ENCODE measurements at regions of chr16 and their contacts with region 1.

Region 1: GRCh38 chr16:50024684-50025536 is at the start of gene CNEP1R1:
- DNase-seq: peak; percentile 97
- ATAC-seq: peak; percentile 99
- H3K4me3 Mint-ChIP-seq: peak within 1 kb of the TSS; percentile 96
- H3K27ac Mint-ChIP-seq: peak within 1 kb of the TSS; percentile 90
- H3K4me1 Mint-ChIP-seq: peaks cover 20% of the 10 kb centered on the region
- H3K27me3 Mint-ChIP-seq: peaks cover 2% of the 10 kb centered on the region
- total RNA-seq, gene CNEP1R1: 27.7 to 28.4 TPM

Region 2: GRCh38 chr16:49980166-49980565 is 44.7 kb before region 1 on chr16:
- CTCF ChIA-PET with region 1: no interaction called
- DNase-seq: no peak
- ATAC-seq: no peak
- H3K4me3 Mint-ChIP-seq: no peak overlapping the region
- H3K27ac Mint-ChIP-seq: no peak overlapping the region
- H3K4me1 Mint-ChIP-seq: no peaks in the 10 kb centered on the region
- H3K27me3 Mint-ChIP-seq: peaks cover 7% of the 10 kb centered on the region

Region 3: GRCh38 chr16:50046853-50047252 is 21.9 kb after region 1 on chr16:
- CTCF ChIA-PET with region 1: interaction called, 10 read pairs
- DNase-seq: no peak
- ATAC-seq: no peak
- H3K4me3 Mint-ChIP-seq: no peak overlapping the region
- H3K27ac Mint-ChIP-seq: no peak overlapping the region
- H3K4me1 Mint-ChIP-seq: no peaks in the 10 kb centered on the region
- H3K27me3 Mint-ChIP-seq: peaks cover 27% of the 10 kb centered on the region

Region 4: DNA sequence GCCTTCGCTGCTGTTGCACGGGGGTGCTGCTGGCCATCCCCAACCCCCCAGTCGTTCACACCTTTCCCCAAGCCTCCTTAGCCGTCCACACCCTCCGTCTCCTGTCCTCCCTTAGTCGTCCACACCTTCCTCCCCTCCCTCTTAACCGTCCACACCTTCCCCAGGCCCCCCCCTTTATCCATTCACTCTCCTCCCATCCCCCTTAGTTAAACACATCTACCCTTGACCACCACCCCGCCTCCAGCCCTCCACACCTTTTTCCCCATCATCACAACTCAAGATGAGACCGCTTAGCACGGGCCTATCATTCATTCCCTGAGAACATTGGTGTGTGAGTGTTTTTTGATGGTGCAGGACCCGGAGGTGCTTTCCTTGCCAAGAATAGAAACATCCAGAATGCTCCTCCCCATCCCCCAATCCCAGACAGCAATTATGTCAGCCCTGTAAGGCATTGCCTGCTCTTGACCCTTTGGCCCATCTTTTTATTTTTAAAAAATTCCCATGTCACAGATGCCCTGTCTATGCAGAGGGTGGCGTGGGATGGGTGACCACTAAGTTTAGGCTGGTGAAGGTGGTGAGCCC is 129.6 kb after region 1 on chr16:
- CTCF ChIA-PET with region 1: interaction called, 12 read pairs
- DNase-seq: peak; percentile 44
- ATAC-seq: no peak
- H3K4me3 Mint-ChIP-seq: peak overlapping the region; percentile 80
- H3K27ac Mint-ChIP-seq: peak overlapping the region; percentile 69
- H3K4me1 Mint-ChIP-seq: peaks cover 43% of the 10 kb centered on the region
- H3K27me3 Mint-ChIP-seq: no peaks in the 10 kb centered on the region

Region 5: DNA sequence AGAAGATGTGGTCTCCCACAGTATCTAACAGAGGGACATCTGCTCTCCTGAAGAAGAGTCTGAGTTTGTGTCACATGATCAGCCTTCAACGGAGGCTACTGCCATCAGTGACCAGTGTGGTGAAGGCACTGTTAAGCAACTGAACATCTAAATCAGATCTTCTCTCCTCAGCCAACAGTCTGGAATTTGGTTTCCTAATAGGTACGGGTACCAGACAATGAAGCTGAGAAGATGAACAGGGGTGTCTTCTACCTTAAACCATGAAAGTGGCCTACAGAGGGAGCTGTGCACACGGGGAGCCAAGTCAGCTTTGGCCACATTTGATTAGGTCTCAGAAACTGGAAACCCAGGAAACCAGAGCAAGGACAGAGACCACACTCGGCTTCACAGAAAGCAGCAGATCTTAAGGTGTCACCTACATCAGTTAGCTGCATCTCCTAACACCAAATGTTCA is 302.1 kb after region 1 on chr16:
- CTCF ChIA-PET with region 1: interaction called, 15 read pairs
- DNase-seq: peak; percentile 88
- ATAC-seq: peak; percentile 97
- H3K4me3 Mint-ChIP-seq: no peak overlapping the region
- H3K27ac Mint-ChIP-seq: peak overlapping the region; percentile 69
- H3K4me1 Mint-ChIP-seq: peaks cover 50% of the 10 kb centered on the region
- H3K27me3 Mint-ChIP-seq: no peaks in the 10 kb centered on the region

Region 6: GRCh38 chr16:50360033-50360778 is 335.3 kb after region 1 on chr16:
- CTCF ChIA-PET with region 1: interaction called, 18 read pairs
- DNase-seq: no peak
- ATAC-seq: no peak
- H3K4me3 Mint-ChIP-seq: no peak overlapping the region
- H3K27ac Mint-ChIP-seq: no peak overlapping the region
- H3K4me1 Mint-ChIP-seq: peaks cover 35% of the 10 kb centered on the region
- H3K27me3 Mint-ChIP-seq: no peaks in the 10 kb centered on the region

Measured in activated CD8-positive, alpha-beta memory T cell treated with anti-CD3 and anti-CD28 coated beads, Interleukin-2, amount 10 ng/mL, durations not matched to agents 7 days and 5 days (primary cell).